PC-3 (cell line): ENCODE measurements at regions of chr3 and their contacts with region 1.

Region 1: DNA sequence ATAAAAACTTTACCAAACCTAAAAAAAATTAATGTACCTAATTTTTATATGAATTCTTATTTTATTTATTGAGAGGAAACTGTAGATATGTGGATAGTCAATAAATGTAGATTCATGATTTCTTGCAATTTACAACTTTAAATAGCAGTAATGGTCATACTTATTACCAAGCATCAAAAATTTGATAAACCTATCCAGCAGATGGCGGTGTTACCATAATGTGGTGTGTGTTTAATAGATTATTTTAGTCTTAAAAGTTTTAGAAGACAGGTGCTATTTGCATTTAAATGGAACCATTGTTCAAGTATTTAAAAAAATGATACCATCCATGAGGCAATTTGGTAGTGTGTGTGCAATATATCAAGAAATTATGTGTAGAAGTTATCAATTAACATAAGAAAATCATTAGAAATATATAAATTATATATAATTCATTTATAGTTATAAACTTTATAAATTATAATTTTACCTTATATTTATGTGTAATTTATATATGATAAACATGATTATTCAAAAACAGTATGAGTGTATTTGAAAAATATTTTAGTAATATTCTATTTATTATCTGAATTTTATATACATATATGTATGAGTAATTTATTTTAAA is 176.0 kb upstream of the BCHE start:
- DNase-seq: peak; percentile 81
- ATAC-seq: peak; percentile 38; the same call in 1 of the 2 replicates
- H3K4me3 ChIP-seq: no peak overlapping the region
- H3K27ac ChIP-seq: no peak overlapping the region
- H3K4me1 ChIP-seq: no peaks in the 10 kb centered on the region
- H3K27me3 ChIP-seq: no peaks in the 10 kb centered on the region
- CTCF ChIP-seq: peak; percentile 75

Region 2: DNA sequence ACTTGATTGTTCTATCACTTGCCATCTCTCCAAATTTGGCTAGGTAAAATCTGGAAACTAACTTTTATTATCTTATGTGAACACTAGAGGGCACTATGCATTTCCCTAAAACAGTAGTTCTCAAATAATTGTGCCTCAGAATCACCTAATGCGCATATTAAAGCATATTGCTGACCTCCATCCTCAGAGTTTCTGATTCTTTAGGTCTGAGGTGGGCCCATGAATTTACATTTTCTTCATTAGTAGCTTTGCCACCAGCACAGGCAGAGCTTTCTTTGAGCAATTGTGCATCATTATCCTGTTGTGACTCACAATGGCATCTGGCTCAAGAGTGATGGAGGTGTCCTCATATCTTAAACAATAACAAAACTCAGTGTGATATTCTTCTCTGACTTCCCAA is 158.5 kb before region 1 on chr3:
- CTCF ChIA-PET with region 1: no interaction called
- POLR2A ChIA-PET with region 1: no interaction called
- intact Hi-C with region 1: loop called (anchors 2 kb)
- DNase-seq: peak; percentile 58
- ATAC-seq: peak; percentile 21
- H3K4me3 ChIP-seq: no peak overlapping the region
- H3K27ac ChIP-seq: no peak overlapping the region
- H3K4me1 ChIP-seq: peaks cover 8% of the 10 kb centered on the region
- H3K27me3 ChIP-seq: no peaks in the 10 kb centered on the region
- CTCF ChIP-seq: peak; percentile 85

Region 3: GRCh38 chr3:165939141-165939540 is 74.0 kb before region 1 on chr3:
- CTCF ChIA-PET with region 1: no interaction called
- POLR2A ChIA-PET with region 1: no interaction called
- intact Hi-C with region 1: no loop called
- DNase-seq: peak; percentile 25
- ATAC-seq: peak; percentile 76
- H3K4me3 ChIP-seq: no peak overlapping the region
- H3K27ac ChIP-seq: no peak overlapping the region
- H3K4me1 ChIP-seq: peaks cover 7% of the 10 kb centered on the region; the same call in 1 of the 2 replicates
- H3K27me3 ChIP-seq: no peaks in the 10 kb centered on the region
- CTCF ChIP-seq: no peak

Region 4: GRCh38 chr3:166052440-166052839 is 39.3 kb after region 1 on chr3:
- CTCF ChIA-PET with region 1: no interaction called
- POLR2A ChIA-PET with region 1: no interaction called
- intact Hi-C with region 1: no loop called
- DNase-seq: peak; percentile 17
- ATAC-seq: peak; percentile 20; the same call in 1 of the 2 replicates
- H3K4me3 ChIP-seq: no peak overlapping the region
- H3K27ac ChIP-seq: no peak overlapping the region
- H3K4me1 ChIP-seq: no peaks in the 10 kb centered on the region
- H3K27me3 ChIP-seq: no peaks in the 10 kb centered on the region
- CTCF ChIP-seq: peak; percentile 45

Region 5: GRCh38 chr3:166425899-166426575 is 412.9 kb after region 1 on chr3:
- CTCF ChIA-PET with region 1: no interaction called
- POLR2A ChIA-PET with region 1: no interaction called
- intact Hi-C with region 1: loop called (anchors 5 kb)
- DNase-seq: peak; percentile 37
- ATAC-seq: peak; percentile 63
- H3K4me3 ChIP-seq: no peak overlapping the region
- H3K27ac ChIP-seq: no peak overlapping the region
- H3K4me1 ChIP-seq: no peaks in the 10 kb centered on the region
- H3K27me3 ChIP-seq: no peaks in the 10 kb centered on the region
- CTCF ChIP-seq: peak; percentile 48; the same call in 1 of the 2 replicates

Region 6: DNA sequence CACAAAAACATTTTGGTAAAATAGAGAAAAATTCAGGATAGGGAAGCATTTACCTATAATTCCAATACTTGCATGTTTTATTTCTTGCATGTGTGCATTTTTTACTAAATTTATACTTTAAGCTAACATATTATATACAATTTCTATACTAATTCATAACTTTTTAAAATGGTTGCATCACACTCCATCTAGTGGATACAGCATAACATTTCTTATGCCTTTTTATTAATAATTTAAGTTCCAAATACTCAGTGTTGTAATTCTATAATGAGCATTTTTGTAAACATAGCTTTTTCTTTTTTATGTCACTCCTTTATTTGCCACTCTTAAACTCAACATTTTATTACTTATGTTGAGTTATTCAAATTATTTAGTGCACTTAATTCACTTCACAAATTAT is 889.2 kb after region 1 on chr3:
- CTCF ChIA-PET with region 1: no interaction called
- POLR2A ChIA-PET with region 1: no interaction called
- intact Hi-C with region 1: loop called (anchors 2 kb)
- DNase-seq: peak; percentile 23
- ATAC-seq: no peak
- H3K4me3 ChIP-seq: no peak overlapping the region
- H3K27ac ChIP-seq: no peak overlapping the region
- H3K4me1 ChIP-seq: no peaks in the 10 kb centered on the region
- H3K27me3 ChIP-seq: no peaks in the 10 kb centered on the region
- CTCF ChIP-seq: peak; percentile 53

Region 7: DNA sequence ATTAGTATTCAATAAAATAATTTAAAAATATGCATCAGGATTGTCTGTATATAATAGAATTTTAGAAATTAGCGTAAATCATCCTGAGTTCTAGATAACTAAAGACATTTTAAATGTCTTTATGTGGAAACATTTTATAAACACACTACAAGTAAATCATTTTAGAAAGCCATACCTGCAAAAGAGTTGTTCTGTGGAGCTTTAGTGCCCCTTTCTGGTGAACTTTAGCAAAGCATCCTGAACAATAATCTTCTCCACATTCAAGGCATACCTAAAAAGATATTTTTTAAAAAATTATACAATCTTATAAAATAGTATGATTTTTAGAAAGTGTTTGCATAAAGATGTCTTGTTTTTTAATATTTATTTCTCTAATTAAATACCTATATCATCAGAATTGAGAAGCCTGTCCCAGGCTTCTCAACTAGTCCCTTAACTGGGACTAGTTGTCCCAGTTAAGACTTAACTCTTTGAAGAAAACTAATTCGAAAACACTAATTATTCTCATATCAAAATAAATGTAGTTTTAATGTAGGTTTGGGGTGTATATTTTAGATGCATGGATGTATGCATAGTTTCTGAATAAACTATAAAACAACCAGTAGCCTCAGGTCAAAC is 1337.2 kb after region 1 on chr3:
- CTCF ChIA-PET with region 1: no interaction called
- POLR2A ChIA-PET with region 1: no interaction called
- intact Hi-C with region 1: loop called (anchors 2 kb)
- DNase-seq: peak; percentile 59
- ATAC-seq: peak; percentile 40; the same call in 1 of the 2 replicates
- H3K4me3 ChIP-seq: no peak overlapping the region
- H3K27ac ChIP-seq: no peak overlapping the region
- H3K4me1 ChIP-seq: no peaks in the 10 kb centered on the region
- H3K27me3 ChIP-seq: no peaks in the 10 kb centered on the region
- CTCF ChIP-seq: peak; percentile 65